ENCODE measurements at regions of chr5 and their contacts with region 1.

Region 1: DNA sequence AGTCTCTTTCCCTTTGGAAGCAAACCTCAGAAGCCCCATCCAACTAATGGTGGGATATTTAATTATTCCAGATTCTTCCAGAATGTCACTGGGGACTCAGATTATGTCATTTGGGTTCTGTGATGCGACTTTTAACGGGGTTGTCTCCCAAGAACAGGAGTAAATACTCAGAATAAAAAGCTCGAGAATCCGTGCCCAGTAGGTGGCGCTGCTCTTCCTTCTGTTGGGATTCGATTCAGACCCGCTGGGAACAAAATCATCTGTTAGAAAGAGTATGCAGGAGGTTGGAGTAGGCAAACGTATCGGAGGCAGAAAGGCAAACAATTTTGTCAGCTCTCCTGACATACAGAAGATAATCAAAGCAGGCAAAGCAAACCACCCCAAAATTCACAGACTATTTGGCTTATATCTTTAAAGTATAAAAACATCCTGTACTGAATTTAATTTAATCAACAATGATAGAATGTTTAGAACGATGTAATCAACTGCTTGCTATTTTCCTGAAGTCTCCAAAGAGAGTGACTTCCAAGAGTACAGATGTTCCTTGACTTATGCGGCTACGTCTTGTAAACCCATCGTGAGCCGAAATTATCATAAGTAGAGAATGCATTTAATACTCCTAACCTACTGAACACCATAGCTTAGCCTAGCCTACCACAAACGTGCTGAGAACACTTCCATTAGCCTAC is 169.8 kb upstream of the RAI14 start:
- DNase-seq: peak; percentile 87
- H3K4me3 Mint-ChIP-seq: no peak overlapping the region
- H3K27ac Mint-ChIP-seq: no peak overlapping the region
- H3K4me1 Mint-ChIP-seq: peaks cover 4% of the 10 kb centered on the region
- H3K27me3 Mint-ChIP-seq: peaks cover 31% of the 10 kb centered on the region

Region 2: DNA sequence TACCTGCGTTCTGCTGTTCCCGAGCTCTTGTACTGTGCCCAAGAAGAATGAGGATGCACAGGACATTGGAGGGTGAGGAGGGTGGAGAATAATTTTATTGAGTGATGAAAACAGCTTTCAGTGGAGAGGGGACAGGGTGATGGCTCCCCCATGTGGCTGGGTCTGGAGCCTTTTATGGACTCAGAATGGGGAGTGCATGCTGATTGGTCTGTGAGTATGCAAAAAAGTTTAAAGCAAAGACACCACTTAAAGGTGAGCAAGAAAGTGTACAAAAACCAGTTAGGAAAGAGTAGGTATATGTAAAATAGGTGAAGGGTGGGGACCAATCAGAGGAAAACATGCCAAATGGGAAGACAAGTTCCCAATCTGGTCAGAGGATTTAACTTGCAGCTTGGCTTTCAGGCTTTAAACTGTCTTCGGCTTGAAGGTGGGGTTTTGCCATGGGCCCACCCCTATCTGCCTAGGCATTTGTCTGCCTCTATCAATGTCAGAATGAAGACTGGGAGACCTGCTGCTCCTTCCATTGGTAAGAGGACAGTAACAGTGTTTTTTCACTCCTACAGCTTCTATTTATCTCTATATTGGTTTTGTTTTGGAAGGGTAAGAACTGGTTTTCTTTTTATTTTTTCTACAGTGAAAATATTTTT is 51.8 kb after region 1 on chr5:
- intact Hi-C with region 1: loop called (anchors 2 kb)
- DNase-seq: no peak
- H3K4me3 Mint-ChIP-seq: no peak overlapping the region
- H3K27ac Mint-ChIP-seq: no peak overlapping the region
- H3K4me1 Mint-ChIP-seq: peaks cover 7% of the 10 kb centered on the region
- H3K27me3 Mint-ChIP-seq: peaks cover 3% of the 10 kb centered on the region

Region 3: GRCh38 chr5:34608859-34609648 is 122.8 kb after region 1 on chr5:
- intact Hi-C with region 1: no loop called
- DNase-seq: no peak
- H3K4me3 Mint-ChIP-seq: no peak overlapping the region
- H3K27ac Mint-ChIP-seq: no peak overlapping the region
- H3K4me1 Mint-ChIP-seq: no peaks in the 10 kb centered on the region
- H3K27me3 Mint-ChIP-seq: no peaks in the 10 kb centered on the region

Region 4: GRCh38 chr5:34838785-34839714 is 352.7 kb after region 1 on chr5 and contains the start of gene TTC23L:
- intact Hi-C with region 1: no loop called
- DNase-seq: peak; percentile 97
- H3K4me3 Mint-ChIP-seq: peak within 1 kb of the TSS; percentile 89
- H3K27ac Mint-ChIP-seq: peak within 1 kb of the TSS; percentile 79
- H3K4me1 Mint-ChIP-seq: peaks cover 12% of the 10 kb centered on the region
- H3K27me3 Mint-ChIP-seq: peaks cover 10% of the 10 kb centered on the region
- total RNA-seq, gene TTC23L: not detected in 2 replicates

Region 5: DNA sequence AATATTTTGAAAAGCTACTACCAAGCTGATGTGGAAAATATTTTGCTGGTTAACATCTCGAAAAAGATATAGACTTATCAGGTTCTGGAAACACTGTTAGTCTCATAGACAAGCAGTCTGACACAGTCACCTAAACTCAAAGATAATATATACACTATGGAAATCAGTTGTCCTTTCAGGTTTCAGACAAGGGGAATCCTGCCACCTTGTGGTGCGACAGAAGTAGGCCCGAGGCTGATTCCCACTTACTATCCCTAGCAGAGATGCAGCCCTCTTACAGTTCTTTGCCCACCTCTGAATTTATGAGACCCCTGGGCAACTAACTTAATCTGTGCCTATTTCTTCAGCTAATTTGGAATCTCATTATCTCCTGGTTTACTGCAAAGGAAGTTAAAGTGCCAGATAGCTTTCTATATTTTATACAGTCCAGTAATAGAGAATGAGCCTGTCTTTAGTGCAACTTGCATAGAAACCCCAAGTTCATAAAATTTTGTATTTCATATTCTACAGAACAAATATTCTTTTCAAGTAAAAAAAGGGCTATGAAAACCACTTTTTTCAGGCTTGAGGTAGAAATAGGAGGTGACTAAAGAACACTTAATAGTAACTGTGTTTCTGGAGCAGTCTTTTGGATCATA is 412.1 kb after region 1 on chr5:
- intact Hi-C with region 1: loop called (anchors 1 kb)
- DNase-seq: peak; percentile 86
- H3K4me3 Mint-ChIP-seq: no peak overlapping the region
- H3K27ac Mint-ChIP-seq: no peak overlapping the region
- H3K4me1 Mint-ChIP-seq: no peaks in the 10 kb centered on the region
- H3K27me3 Mint-ChIP-seq: no peaks in the 10 kb centered on the region

Region 6: DNA sequence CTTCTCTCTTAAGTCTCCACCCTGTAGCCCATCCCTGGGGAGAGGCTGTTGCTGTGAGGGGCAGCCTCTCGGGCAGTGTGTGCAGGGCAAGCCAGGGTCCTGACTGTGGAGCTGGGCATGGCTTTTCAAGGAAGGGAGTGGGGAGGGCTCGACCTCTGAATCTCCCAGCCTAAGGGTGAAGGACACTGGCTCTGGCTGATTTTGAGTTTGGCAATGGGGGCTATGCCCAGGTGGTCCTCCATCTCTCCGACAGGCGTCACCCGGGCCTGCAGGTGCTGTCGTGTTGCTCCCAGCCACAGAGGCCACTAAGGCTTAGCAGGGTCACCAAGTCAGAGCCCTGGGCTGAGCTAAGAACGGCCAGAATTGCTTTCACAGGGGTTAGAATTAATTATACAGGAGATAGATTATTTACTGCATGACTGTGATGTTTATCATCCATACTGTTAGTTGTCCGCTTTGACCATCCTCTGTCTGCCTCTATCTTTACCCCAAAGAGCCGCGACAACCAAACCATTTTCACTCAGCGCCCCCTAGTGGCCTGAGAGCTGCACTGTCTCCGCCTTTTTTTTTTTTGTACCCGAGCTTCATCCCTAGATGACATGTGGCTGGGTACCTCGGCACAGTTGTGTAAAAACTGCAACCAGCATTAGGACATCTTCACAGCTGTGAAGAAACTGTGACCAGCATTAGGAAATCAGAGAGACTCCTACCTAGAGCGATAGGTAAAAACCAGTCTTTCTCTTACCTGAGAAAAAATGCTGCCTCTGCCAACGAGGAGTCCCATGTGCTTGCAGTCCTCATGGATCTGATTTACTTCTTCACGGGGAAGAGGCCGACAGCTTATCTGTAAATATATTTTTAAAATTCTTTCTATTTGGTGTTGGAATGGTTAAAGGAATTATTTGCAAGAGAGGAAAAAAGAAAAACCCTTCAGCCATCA is 517.0 kb after region 1 on chr5:
- intact Hi-C with region 1: loop called (anchors 1 kb)
- DNase-seq: peak; percentile 89
- H3K4me3 Mint-ChIP-seq: no peak overlapping the region
- H3K27ac Mint-ChIP-seq: no peak overlapping the region
- H3K4me1 Mint-ChIP-seq: no peaks in the 10 kb centered on the region
- H3K27me3 Mint-ChIP-seq: peaks cover 20% of the 10 kb centered on the region

Region 7: GRCh38 chr5:35869685-35870277 is 1383.5 kb after region 1 on chr5:
- intact Hi-C with region 1: no loop called
- DNase-seq: no peak
- H3K4me3 Mint-ChIP-seq: no peak overlapping the region
- H3K27ac Mint-ChIP-seq: peak overlapping the region; percentile 72
- H3K4me1 Mint-ChIP-seq: peaks cover 47% of the 10 kb centered on the region
- H3K27me3 Mint-ChIP-seq: no peaks in the 10 kb centered on the region